ENCODE measurements at regions of chr22 and their contacts with region 1.

Region 1: GRCh38 chr22:36065775-36066559 is 37.3 kb upstream of the RBFOX2 start:
- DNase-seq: peak; percentile 64
- H3K4me3 ChIP-seq: peak overlapping the region; percentile 51
- H3K27me3 ChIP-seq: no peaks in the 10 kb centered on the region
- CTCF ChIP-seq: peak; percentile 98

Region 2: GRCh38 chr22:35921777-35922176 is 144.2 kb before region 1 on chr22:
- CTCF ChIA-PET with region 1: interaction called, 138 read pairs
- POLR2A ChIA-PET with region 1: no interaction called
- DNase-seq: peak; percentile 63
- H3K4me3 ChIP-seq: no peak overlapping the region
- H3K27me3 ChIP-seq: no peaks in the 10 kb centered on the region
- CTCF ChIP-seq: peak; percentile 70

Region 3: DNA sequence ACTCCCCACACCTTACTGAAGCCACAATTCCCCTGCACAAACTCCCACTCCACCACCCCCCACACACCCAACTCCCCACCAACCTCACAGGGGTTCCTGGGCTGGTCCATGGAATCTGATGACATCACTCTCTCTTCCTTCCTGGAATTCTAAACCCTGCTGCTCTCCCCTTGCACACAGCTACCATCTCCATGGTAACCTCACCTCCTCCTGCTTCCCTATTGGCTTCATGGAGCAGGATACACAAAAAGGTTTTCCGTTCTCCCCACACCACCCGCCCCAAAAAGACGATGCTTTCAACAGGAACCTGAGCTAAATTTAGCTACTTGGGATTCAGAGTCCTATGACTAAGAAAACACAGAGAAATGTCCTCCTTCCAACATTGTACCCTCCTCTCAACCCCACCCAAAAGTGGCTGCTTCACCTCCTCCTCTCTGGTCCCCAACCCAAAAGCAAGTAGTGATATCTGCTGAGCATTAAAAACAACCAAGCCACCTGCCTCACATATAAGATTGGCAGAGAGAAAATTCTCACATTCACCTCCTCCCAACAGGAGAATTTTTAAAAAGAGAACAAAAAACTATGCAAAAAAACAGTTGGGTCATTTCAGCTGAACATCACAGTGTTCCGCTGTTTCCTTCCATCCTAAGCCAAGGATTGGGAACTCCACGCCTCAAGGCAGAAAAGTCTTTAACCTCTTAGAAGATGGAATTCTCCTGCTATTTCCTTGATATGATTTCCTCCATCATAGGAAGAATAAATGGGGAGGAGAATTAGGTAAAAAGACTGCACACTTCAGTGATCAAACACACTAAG is 104.3 kb before region 1 on chr22:
- CTCF ChIA-PET with region 1: interaction called, 24 read pairs
- POLR2A ChIA-PET with region 1: no interaction called
- DNase-seq: no peak
- H3K4me3 ChIP-seq: no peak overlapping the region
- H3K27me3 ChIP-seq: no peaks in the 10 kb centered on the region
- CTCF ChIP-seq: no peak

Region 4: DNA sequence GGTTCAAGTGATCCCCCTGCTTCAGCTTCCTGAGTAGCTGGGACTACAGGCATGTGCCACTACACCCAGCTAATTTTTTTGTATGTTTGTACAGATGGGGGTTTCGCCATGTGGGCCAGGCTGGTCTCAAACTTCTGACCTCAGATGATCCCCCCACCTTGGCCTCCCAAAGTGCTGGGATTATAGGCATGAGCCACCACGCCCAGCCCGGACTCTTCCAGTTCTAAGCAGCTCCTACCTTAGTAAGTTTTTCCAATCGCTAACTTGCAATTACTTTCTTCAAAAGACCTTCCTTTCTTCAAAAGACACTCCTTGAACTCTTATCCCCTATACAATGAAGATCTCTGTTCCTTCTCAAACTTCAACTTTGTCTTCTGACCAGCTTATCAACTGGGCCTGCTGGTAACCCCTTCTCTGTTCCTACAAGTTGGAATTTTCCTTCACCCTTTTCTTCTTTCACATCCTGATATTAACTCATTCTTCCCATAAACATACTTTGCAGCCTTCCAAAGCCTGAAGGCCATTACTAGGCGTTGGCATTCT is 63.2 kb before region 1 on chr22:
- CTCF ChIA-PET with region 1: interaction called, 14 read pairs
- POLR2A ChIA-PET with region 1: no interaction called
- DNase-seq: no peak
- H3K4me3 ChIP-seq: no peak overlapping the region
- H3K27me3 ChIP-seq: no peaks in the 10 kb centered on the region
- CTCF ChIP-seq: no peak

Region 5: DNA sequence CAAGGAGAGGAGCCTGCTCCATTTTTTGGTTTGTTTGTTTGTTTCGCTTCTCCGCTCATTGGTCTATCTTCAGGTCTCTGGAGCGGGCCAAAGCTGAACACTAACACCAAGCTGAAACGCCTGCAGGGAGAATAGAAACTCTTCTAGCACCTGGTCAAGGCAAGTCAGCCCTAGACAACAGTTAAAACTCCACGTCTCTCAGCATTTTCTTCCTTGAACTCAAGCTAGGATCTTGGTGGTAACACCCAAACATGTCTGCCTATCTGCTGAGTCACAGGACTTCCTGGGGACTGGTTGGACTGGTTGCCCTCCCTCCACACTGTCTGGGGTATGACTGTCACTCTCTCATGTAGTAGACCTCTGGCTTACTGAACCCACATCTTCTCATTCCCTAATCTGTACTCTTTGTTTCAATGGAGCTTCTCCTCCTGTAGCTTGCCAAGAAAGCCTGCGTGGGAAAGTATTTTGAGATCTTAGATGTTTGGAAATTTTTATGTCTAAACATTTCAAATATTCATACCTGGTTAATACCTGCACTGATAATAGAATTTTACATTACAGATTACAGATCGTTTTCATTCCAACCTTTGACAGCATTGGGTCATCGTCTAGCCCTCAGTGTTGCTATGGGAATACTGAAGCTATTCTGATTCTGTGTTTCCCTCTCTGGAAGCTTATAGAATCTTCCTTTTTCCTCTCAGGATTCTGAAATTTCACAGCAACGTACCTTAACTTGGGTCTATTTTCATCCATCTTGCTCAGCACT is 13.3 kb before region 1 on chr22:
- CTCF ChIA-PET with region 1: interaction called, 65 read pairs
- POLR2A ChIA-PET with region 1: no interaction called
- DNase-seq: no peak
- H3K4me3 ChIP-seq: no peak overlapping the region
- H3K27me3 ChIP-seq: no peaks in the 10 kb centered on the region
- CTCF ChIP-seq: no peak

Region 6: GRCh38 chr22:36123673-36124630 is 58.0 kb after region 1 on chr22:
- CTCF ChIA-PET with region 1: interaction called, 29 read pairs
- POLR2A ChIA-PET with region 1: no interaction called
- DNase-seq: peak; percentile 58
- H3K4me3 ChIP-seq: peak overlapping the region; percentile 10; the same call in 1 of the 2 replicates
- H3K27me3 ChIP-seq: 0 out of 2 replicates have a peak, but pooled peaks cover 1% of the 10 kb centered on the region
- CTCF ChIP-seq: peak; percentile 99

Measured in BJ (cell line).